CD4-positive, alpha-beta memory T cell (primary cell): ENCODE measurements at regions of chr12 and their contacts with region 1.

Region 1: DNA sequence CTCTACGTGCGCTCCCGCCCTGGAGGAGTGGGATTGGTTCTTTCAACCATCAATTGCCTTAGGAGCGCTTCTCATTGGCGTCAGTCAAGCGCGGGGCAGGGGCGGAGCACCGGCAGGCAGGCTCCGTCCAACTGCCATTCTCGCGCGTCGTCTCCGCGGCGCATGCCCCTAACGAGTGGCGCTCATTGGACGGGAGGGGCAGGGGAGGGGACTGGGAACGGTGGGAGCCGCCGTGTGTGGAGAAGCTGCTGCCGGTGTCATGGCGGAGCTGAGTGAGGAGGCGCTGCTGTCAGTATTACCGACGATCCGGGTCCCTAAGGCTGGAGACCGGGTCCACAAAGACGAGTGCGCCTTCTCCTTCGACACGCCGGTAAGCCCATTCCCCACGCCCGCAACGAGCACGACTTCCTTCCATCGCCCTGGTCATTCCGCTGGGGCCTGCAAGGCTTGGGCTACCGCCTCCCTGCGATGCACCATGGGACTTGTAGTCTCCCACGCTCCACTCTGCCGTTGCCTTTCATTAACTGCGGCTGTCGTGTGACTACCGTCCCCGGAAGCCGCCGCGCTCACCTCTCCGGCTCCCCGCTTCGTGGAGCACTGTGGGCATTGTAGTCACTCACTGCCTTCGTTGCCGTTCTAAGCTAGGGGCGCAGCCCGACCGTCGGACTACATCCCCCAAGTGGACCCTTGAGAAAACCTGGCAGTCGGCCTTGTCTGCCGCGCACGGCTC is at the start of gene USP5:
- DNase-seq: peak; percentile 99 to 100 (median 99)
- H3K4me3 ChIP-seq: peak within 1 kb of the TSS; percentile 62 to 97
- H3K4me3 Mint-ChIP-seq: peak within 1 kb of the TSS; percentile 88 to 99 (median 95)
- H3K27ac ChIP-seq: peak within 1 kb of the TSS; percentile 92
- H3K27ac Mint-ChIP-seq: peak within 1 kb of the TSS; percentile 82 to 100 (median 99)
- H3K4me1 ChIP-seq: peaks cover 37% of the 10 kb centered on the region
- H3K4me1 Mint-ChIP-seq: peaks cover 18 to 36% (median 27%) of the 10 kb centered on the region in 4 donors
- H3K27me3 ChIP-seq: no peaks in the 10 kb centered on the region
- H3K27me3 Mint-ChIP-seq: no peaks in the 10 kb centered on the region
- total RNA-seq, gene USP5: 65.2 to 69.3 TPM

Region 2: GRCh38 chr12:6092784-6093722 is 759.0 kb before region 1 on chr12:
- CTCF ChIA-PET with region 1: no interaction called
- POLR2A ChIA-PET with region 1: no interaction called
- intact Hi-C with region 1: no loop called
- DNase-seq: no peak
- H3K4me3 ChIP-seq: no peak overlapping the region
- H3K4me3 Mint-ChIP-seq: no peak overlapping the region
- H3K27ac ChIP-seq: no peak overlapping the region
- H3K27ac Mint-ChIP-seq: no peak overlapping the region
- H3K4me1 ChIP-seq: no peaks in the 10 kb centered on the region
- H3K4me1 Mint-ChIP-seq: peaks cover 0 to 2% (median under 1%) of the 10 kb centered on the region in 4 donors
- H3K27me3 ChIP-seq: no peaks in the 10 kb centered on the region
- H3K27me3 Mint-ChIP-seq: peaks cover 15 to 54% of the 10 kb centered on the region in 2 donors

Region 3: DNA sequence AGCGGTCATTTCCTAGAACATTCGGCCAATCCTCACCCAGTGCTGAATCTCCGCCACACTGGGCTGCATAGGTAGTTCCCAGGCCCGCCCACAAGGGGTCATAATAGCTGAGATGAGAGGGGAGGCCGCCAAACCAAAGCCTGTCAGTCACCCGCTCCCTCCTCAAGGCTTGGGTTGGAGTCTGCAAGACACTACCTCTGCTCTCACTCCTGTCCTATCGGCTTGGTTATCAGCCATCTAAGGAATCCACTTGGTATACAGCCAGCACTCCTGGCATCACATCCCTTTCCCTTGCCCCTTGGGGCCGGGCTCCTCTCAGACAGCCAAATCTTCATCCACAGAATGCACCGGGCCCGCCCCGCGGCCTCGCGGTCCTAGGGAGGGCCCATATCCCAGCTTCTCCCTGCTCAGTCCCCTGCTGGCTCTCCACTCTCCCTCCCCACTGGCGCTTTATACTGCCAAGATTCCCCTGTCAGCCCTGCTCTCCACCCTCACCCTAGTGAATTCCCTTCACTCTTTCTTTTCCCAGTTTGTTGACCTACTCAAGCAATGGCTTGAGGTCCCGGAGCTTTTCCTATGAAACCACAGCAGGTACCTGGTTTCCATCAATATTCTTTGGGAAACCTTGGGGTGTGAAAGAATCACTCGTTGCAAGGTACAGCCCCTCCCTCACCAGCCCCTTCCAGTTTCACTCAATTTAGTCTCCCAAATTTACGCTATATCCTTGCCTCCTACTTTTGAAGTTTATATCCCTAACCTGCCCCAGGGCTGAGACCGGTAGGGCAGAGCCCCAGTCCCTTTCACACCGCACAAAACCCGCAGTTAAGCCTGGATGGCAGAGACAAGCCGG is 297.7 kb before region 1 on chr12:
- CTCF ChIA-PET with region 1: no interaction called
- POLR2A ChIA-PET with region 1: no interaction called
- intact Hi-C with region 1: loop called (anchors 2 kb)
- DNase-seq: peak; percentile 60 to 79 (median 63)
- H3K4me3 ChIP-seq: peak overlapping the region; percentile 71 to 73
- H3K4me3 Mint-ChIP-seq: peak overlapping the region; percentile 81 to 96 (median 88)
- H3K27ac ChIP-seq: peak overlapping the region; percentile 48
- H3K27ac Mint-ChIP-seq: peak overlapping the region; percentile 14 to 89 (median 70)
- H3K4me1 ChIP-seq: peaks cover 57% of the 10 kb centered on the region
- H3K4me1 Mint-ChIP-seq: peaks cover 28 to 64% (median 45%) of the 10 kb centered on the region in 4 donors
- H3K27me3 ChIP-seq: no peaks in the 10 kb centered on the region
- H3K27me3 Mint-ChIP-seq: no peaks in the 10 kb centered on the region

Region 4: GRCh38 chr12:6626654-6627283 is 225.3 kb before region 1 on chr12:
- CTCF ChIA-PET with region 1: no interaction called
- POLR2A ChIA-PET with region 1: no interaction called
- intact Hi-C with region 1: no loop called
- DNase-seq: no peak
- H3K4me3 ChIP-seq: peak overlapping the region in 1 of 2 donors; percentile 57
- H3K4me3 Mint-ChIP-seq: peak overlapping the region; percentile 81 to 96 (median 88)
- H3K27ac ChIP-seq: peak overlapping the region; percentile 31
- H3K27ac Mint-ChIP-seq: peak overlapping the region in 5 of 7 donors; percentile 30 to 98 (median 92)
- H3K4me1 ChIP-seq: peaks cover 34% of the 10 kb centered on the region
- H3K4me1 Mint-ChIP-seq: peaks cover 21 to 45% (median 28%) of the 10 kb centered on the region in 4 donors
- H3K27me3 ChIP-seq: no peaks in the 10 kb centered on the region
- H3K27me3 Mint-ChIP-seq: no peaks in the 10 kb centered on the region

Region 5: DNA sequence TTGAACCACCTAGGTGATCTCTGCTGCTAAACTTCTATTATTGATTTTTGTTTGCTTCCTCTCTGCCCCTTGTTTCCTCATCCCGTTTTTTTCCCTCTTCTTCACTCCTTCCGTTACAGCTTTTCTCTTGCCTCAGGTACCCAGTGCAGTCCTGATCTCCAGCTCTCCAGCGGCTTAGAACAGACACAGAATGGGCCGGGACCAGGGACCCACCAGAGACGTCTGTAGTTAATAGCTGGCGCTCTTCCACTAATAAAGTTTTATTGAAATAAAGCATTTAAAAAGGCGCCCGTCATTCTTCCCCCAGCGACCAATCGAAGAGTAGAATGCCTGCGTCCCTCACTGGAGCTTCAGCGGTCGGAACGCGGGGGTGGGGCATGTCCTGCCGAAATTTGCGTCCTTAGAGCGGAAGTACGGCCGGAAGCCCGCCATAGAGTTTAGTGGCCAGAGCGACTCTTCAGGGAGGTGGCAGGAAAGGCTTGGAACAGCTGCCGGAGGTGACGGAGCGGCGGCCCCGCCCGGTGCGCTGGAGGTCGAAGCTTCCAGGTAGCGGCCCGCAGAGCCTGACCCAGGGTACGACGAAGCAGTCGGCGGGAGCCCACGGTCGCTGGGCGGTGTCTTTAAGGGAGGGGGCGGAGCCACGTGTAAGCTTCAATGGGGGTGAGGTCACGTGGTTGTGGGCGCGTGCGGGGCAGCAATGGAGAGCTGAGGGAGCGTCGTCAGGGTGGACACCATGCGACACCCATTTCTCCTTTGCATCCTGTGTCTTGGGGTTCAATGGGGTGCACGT is 128.3 kb before region 1 on chr12 and contains the start of gene COPS7A:
- CTCF ChIA-PET with region 1: no interaction called
- POLR2A ChIA-PET with region 1: interaction called, 38 read pairs
- intact Hi-C with region 1: loop called (anchors 1 kb)
- DNase-seq: peak; percentile 93 to 97 (median 96)
- H3K4me3 ChIP-seq: peak within 1 kb of the TSS; percentile 40 to 64
- H3K4me3 Mint-ChIP-seq: peak within 1 kb of the TSS; percentile 88 to 98 (median 94)
- H3K27ac ChIP-seq: peak within 1 kb of the TSS; percentile 68
- H3K27ac Mint-ChIP-seq: peak within 1 kb of the TSS; percentile 92 to 99 (median 98)
- H3K4me1 ChIP-seq: peaks cover 21% of the 10 kb centered on the region
- H3K4me1 Mint-ChIP-seq: peaks cover 15 to 31% (median 22%) of the 10 kb centered on the region in 4 donors
- H3K27me3 ChIP-seq: no peaks in the 10 kb centered on the region
- H3K27me3 Mint-ChIP-seq: no peaks in the 10 kb centered on the region
- total RNA-seq, gene COPS7A: 36.9 to 37.7 TPM

Region 6: GRCh38 chr12:6825398-6826124 is 26.5 kb before region 1 on chr12:
- CTCF ChIA-PET with region 1: interaction called, 4 read pairs
- POLR2A ChIA-PET with region 1: interaction called, 24 read pairs
- intact Hi-C with region 1: no loop called
- DNase-seq: peak; percentile 73 to 82 (median 78)
- H3K4me3 ChIP-seq: no peak overlapping the region
- H3K4me3 Mint-ChIP-seq: peak overlapping the region in 1 of 8 donors; percentile 57
- H3K27ac ChIP-seq: no peak overlapping the region
- H3K27ac Mint-ChIP-seq: peak overlapping the region in 4 of 7 donors; percentile 24 to 71 (median 34)
- H3K4me1 ChIP-seq: peaks cover 36% of the 10 kb centered on the region
- H3K4me1 Mint-ChIP-seq: peaks cover 17 to 60% (median 28%) of the 10 kb centered on the region in 4 donors
- H3K27me3 ChIP-seq: peaks cover 10% of the 10 kb centered on the region
- H3K27me3 Mint-ChIP-seq: peaks cover 6 to 24% of the 10 kb centered on the region in 2 donors

Region 7: DNA sequence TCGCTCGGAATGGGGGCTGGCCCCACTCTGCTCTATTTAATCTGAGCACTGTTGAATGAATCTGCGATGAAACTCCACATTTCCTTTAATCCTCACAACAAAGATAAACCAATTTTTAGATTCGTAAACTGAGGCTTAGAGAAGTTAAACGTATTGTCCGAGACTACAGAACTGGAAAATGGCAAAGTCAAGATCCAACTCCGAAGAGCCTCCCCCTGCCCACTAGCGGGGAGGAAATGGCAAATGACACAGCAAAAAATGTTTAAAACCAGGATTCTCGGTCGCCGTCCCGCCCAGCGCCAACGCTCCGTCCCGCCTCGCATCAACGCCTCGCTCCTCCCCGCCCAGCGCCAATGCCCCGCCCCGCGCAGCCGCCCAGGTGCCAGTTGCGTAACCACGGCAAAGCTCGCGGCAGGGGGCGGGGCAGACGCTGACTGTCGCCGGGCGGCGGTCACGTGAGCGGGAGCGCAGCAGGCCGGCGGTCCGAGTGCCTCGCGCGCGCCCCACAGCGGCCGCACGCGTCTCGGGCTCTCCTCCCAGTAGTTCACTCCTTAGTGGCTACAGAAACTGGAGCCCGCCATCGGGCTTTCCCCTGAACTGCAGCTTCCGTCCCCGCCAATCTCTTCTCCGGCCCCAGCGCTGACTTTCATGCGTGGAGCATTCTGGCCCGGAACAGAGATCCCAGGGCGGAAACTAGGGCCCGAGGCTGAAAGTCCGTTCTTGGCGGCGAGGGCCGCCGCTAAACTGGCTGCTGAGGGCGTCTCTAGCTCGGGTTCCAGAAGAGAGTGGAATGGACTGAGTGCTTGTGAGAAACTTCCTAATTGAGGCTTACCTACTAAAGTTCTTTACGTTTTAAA is 38.9 kb after region 1 on chr12:
- CTCF ChIA-PET with region 1: interaction called, 14 read pairs
- POLR2A ChIA-PET with region 1: interaction called, 22 read pairs
- intact Hi-C with region 1: loop called (anchors 1 kb)
- DNase-seq: peak; percentile 97 to 98 (median 98)
- H3K4me3 ChIP-seq: peak overlapping the region; percentile 74 to 93
- H3K4me3 Mint-ChIP-seq: peak overlapping the region; percentile 82 to 87 (median 85)
- H3K27ac ChIP-seq: peak overlapping the region; percentile 91
- H3K27ac Mint-ChIP-seq: peak overlapping the region; percentile 92 to 98 (median 95)
- H3K4me1 ChIP-seq: peaks cover 16% of the 10 kb centered on the region
- H3K4me1 Mint-ChIP-seq: peaks cover 5 to 15% (median 11%) of the 10 kb centered on the region in 4 donors
- H3K27me3 ChIP-seq: no peaks in the 10 kb centered on the region
- H3K27me3 Mint-ChIP-seq: no peaks in the 10 kb centered on the region

Region 8: GRCh38 chr12:6944381-6945186 is 92.5 kb after region 1 on chr12:
- CTCF ChIA-PET with region 1: interaction called, 4 read pairs
- POLR2A ChIA-PET with region 1: interaction called, 28 read pairs
- intact Hi-C with region 1: loop called (anchors 1 kb)
- DNase-seq: peak; percentile 84 to 90 (median 85)
- H3K4me3 ChIP-seq: peak overlapping the region; percentile 87 to 90
- H3K4me3 Mint-ChIP-seq: peak overlapping the region; percentile 91 to 99 (median 98)
- H3K27ac ChIP-seq: peak overlapping the region; percentile 91
- H3K27ac Mint-ChIP-seq: peak overlapping the region; percentile 95 to 100 (median 98)
- H3K4me1 ChIP-seq: peaks cover 66% of the 10 kb centered on the region
- H3K4me1 Mint-ChIP-seq: peaks cover 37 to 74% (median 60%) of the 10 kb centered on the region in 4 donors
- H3K27me3 ChIP-seq: no peaks in the 10 kb centered on the region
- H3K27me3 Mint-ChIP-seq: no peaks in the 10 kb centered on the region